Vagina (tissue), 2 donors: ENCODE measurements at regions of chr5 and their contacts with region 1.

Region 1: DNA sequence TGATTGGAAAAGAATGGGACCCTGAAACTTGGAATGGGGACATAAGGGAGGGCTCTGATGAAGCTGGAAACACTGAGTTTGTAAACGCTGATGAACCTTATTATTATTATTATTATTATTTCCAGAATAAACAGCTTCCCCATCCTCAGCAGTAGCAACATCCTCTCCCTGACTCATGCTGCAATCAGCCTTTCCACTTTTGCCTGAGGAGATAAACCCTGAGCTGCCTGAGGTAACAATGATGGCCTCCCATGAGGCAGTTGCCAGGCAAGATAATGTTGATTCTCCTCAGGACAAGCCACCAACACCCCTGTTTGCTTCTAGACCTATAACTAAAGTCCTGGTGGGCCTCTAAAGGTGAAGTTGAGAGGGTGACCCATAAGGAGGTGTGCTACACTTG is 139.2 kb upstream of the ATP10B start:
- DNase-seq: no peak
- H3K4me3 ChIP-seq: no peak overlapping the region
- H3K27ac ChIP-seq: no peak overlapping the region
- H3K4me1 ChIP-seq: no peaks in the 10 kb centered on the region
- H3K27me3 ChIP-seq: no peaks in the 10 kb centered on the region
- CTCF ChIP-seq: no peak
- POLR2A ChIP-seq: no peak

Region 2: DNA sequence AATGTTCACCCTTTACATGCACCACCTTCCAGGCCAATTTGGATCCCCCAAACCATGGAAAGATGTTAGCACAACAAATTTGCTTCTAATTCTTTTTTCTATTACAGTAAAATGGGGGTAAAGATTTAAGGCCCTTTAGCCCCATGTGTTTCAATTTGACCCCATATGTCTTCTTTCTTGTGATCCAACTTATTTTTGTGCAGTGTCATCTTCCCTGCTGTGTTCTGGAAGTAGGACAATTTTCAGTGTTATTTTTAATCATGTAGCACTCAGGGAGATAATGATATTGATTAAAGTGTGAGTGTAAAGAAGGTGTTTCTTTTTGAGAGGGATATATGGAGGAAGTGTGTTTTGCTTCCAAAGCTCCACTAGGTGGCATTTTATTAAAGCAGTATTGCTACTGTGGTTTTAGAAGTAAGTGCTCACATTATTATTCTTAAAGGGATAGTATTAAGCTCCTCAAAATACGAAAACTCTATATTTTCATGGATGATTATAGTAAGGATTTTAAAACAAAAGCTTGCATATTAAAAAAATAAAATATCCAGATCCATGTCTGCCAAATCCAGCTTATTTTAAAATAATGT is 20.5 kb before region 1 on chr5:
- intact Hi-C with region 1: loop called (anchors 2 kb)
- DNase-seq: no peak
- H3K4me3 ChIP-seq: no peak overlapping the region
- H3K27ac ChIP-seq: no peak overlapping the region
- H3K4me1 ChIP-seq: no peaks in the 10 kb centered on the region
- H3K27me3 ChIP-seq: no peaks in the 10 kb centered on the region
- CTCF ChIP-seq: no peak
- POLR2A ChIP-seq: no peak

Region 3: DNA sequence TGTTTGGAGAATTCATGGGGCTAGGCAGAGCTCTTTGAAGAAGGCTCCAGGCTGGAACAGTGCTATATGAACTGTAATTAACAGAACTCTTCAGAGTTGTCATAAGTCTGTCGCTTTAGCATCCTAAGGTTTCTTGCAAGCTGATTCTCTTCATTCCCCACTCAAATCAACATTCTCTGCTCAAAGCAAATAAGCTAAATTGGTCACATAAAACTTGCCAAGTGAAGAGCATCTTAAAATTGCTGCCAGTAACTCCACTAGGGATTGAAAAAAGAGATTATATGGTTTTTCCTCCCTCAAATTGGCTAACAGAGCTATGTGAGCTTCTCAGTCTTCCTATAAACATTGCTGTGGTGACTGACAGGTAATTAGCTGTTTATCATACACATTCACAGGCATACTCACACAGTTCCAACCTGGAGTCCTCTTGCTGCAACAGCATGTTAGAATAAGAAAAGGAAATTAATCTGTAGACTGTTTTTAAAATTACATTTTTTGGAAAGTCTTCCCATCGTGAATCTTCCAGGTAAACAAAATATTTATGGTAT is 159.3 kb after region 1 on chr5:
- intact Hi-C with region 1: no loop called
- DNase-seq: no peak
- H3K4me3 ChIP-seq: no peak overlapping the region
- H3K27ac ChIP-seq: no peak overlapping the region
- H3K4me1 ChIP-seq: no peaks in the 10 kb centered on the region
- H3K27me3 ChIP-seq: no peaks in the 10 kb centered on the region
- CTCF ChIP-seq: no peak
- POLR2A ChIP-seq: no peak